ENCODE measurements at regions of chr9 and their contacts with region 1.

Region 1: GRCh38 chr9:124869986-124870560 is 8.1 kb downstream of the ARPC5L start:
- DNase-seq: peak; percentile 98
- H3K4me3 Mint-ChIP-seq: peak overlapping the region; percentile 92
- H3K27ac Mint-ChIP-seq: peak overlapping the region; percentile 99
- H3K4me1 Mint-ChIP-seq: peaks cover 52% of the 10 kb centered on the region
- H3K27me3 Mint-ChIP-seq: no peaks in the 10 kb centered on the region

Region 2: GRCh38 chr9:124415102-124415851 is 454.8 kb before region 1 on chr9 and contains the start of gene PSMB7:
- CTCF ChIA-PET with region 1: no interaction called
- intact Hi-C with region 1: loop called (anchors 2 kb)
- DNase-seq: peak; percentile 99
- H3K4me3 Mint-ChIP-seq: peak within 1 kb of the TSS; percentile 95
- H3K27ac Mint-ChIP-seq: peak within 1 kb of the TSS; percentile 83
- H3K4me1 Mint-ChIP-seq: peaks cover 38% of the 10 kb centered on the region
- H3K27me3 Mint-ChIP-seq: no peaks in the 10 kb centered on the region
- total RNA-seq, gene PSMB7: 161 to 167 TPM

Region 3: DNA sequence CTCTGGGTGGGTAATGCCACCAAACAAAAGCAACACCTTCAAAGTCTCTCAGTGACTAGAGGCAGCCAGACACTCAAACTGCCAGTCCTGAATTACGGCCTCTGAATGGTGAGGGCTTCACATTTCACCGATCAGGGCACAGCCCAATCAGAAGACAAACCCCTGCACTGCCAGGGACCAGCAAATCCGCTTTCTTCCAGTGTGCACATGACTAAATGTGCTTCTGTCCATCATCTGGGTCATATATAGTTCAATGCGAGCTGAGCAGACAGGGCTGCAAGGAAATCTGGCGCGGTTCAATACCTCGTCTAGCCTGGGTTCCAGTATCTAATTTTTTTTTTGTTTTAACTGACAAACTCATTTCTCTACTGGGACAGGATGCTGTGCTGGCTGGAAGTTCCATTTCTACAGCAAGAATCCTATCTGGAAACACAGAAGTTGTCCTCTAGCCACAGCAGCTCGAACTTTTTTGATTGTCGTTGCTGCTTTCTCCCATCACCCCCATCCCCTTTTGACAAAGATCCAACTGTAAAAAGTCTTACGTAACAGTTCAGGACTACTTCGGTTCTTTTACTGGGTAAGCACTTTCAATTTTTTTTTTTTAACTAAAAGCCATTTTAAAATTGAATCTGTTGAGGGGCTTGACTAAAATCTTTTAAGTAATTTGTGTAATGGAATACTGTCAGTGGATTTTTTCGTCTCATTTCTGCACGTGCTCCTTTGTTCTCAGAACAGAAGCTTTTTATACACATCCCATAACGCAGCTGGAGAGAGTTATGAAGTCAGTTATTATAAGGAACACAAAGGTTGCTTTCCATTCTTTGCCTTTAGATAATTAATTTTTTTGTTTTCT is 211.7 kb before region 1 on chr9:
- CTCF ChIA-PET with region 1: no interaction called
- intact Hi-C with region 1: loop called (anchors 1 kb)
- DNase-seq: peak; percentile 75
- H3K4me3 Mint-ChIP-seq: peak overlapping the region; percentile 95
- H3K27ac Mint-ChIP-seq: peak overlapping the region; percentile 89
- H3K4me1 Mint-ChIP-seq: peaks cover 11% of the 10 kb centered on the region
- H3K27me3 Mint-ChIP-seq: no peaks in the 10 kb centered on the region

Region 4: DNA sequence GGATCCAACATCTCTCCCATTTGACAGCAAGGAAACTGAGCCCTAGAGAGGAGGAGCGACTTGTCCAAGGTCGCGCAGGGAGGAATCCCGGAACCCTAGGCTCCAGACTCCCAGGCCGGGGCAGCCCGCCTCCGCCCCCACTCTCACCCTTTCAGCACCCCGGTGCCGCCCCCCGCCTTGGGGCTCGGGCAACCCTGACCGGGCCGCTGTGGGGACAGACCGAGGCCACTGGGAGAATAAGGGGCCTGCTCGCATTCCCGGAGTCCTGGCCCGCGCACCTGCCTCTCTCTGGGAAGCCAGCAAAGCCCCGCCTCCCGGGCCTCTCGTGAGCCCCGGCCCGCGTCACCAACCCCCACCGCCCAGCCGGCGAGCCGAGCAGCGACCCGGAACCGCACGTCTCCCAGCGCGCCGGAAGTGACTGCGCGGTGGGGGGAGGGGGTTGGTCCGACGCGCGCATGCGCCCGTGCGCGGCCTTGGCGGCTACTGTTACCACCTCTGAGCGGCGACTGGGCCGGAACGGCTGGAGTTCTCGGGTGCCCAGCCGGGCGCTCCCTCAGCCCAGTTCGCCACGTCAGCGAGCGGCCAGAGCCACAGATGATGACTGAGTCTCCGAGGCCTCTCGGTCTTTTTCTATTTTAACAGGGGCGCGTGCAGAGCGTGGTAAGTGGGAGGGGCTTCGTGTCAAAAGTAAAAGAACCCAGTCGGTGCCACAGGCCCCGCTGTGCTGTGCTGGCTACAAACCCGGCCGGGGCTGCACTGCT is 70.8 kb after region 1 on chr9 and contains the start of gene GOLGA1:
- CTCF ChIA-PET with region 1: interaction called, 4 read pairs
- intact Hi-C with region 1: loop called (anchors 1 kb)
- DNase-seq: peak; percentile 93
- H3K4me3 Mint-ChIP-seq: peak within 1 kb of the TSS; percentile 98
- H3K27ac Mint-ChIP-seq: peak within 1 kb of the TSS; percentile 98
- H3K4me1 Mint-ChIP-seq: peaks cover 22% of the 10 kb centered on the region
- H3K27me3 Mint-ChIP-seq: no peaks in the 10 kb centered on the region
- total RNA-seq, gene GOLGA1: 14.3 to 15.8 TPM

Region 5: GRCh38 chr9:125143375-125144090 is 273.5 kb after region 1 on chr9 and contains the start of gene SCAI:
- CTCF ChIA-PET with region 1: interaction called, 4 read pairs
- intact Hi-C with region 1: loop called (anchors 1 kb)
- DNase-seq: peak; percentile 100
- H3K4me3 Mint-ChIP-seq: peak within 1 kb of the TSS; percentile 82
- H3K27ac Mint-ChIP-seq: peak within 1 kb of the TSS; percentile 58
- H3K4me1 Mint-ChIP-seq: peaks cover 40% of the 10 kb centered on the region
- H3K27me3 Mint-ChIP-seq: no peaks in the 10 kb centered on the region
- total RNA-seq, gene SCAI: 9.6 to 11.8 TPM